Natural killer cell (primary cell): ENCODE measurements at regions of chr17 and their contacts with region 1.

Region 1: GRCh38 chr17:5536866-5537650 is 47.3 kb downstream of the NLRP1 start:
- DNase-seq: no peak
- ATAC-seq: no peak
- H3K4me3 ChIP-seq: no peak overlapping the region
- H3K4me3 Mint-ChIP-seq: no peak overlapping the region
- H3K27ac ChIP-seq: no peak overlapping the region
- H3K27ac Mint-ChIP-seq: peak overlapping the region in 1 of 2 donors; percentile 56
- H3K4me1 ChIP-seq: no peaks in the 10 kb centered on the region
- H3K4me1 Mint-ChIP-seq: peaks cover 0 to 4% of the 10 kb centered on the region in 2 donors
- H3K27me3 ChIP-seq: no peaks in the 10 kb centered on the region
- H3K27me3 Mint-ChIP-seq: no peaks in the 10 kb centered on the region
- CTCF ChIP-seq: no peak

Region 2: DNA sequence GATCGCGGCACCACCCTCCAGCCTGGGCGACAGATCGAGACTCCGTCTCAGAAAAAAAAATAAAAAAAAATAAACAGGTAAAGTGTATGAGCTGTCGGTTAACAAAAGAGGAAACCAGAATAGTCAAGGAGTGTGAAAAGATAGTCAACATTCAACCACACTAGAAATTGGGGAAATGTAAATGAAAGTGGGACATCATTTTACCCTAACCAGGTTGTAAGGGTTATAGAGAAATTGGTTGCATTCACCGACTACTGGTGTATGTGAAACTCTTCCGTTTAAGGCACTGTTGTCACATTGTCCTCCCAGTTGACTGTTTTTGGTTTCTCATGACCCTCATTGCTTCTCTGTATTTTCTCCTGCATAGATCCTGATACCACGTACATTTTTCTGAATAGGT is 192.1 kb before region 1 on chr17:
- intact Hi-C with region 1: loop called (anchors 5 kb)
- DNase-seq: no peak
- ATAC-seq: no peak
- H3K4me3 ChIP-seq: no peak overlapping the region
- H3K4me3 Mint-ChIP-seq: no peak overlapping the region
- H3K27ac ChIP-seq: no peak overlapping the region
- H3K27ac Mint-ChIP-seq: no peak overlapping the region
- H3K4me1 ChIP-seq: no peaks in the 10 kb centered on the region
- H3K4me1 Mint-ChIP-seq: no peaks in the 10 kb centered on the region
- H3K27me3 ChIP-seq: no peaks in the 10 kb centered on the region
- H3K27me3 Mint-ChIP-seq: no peaks in the 10 kb centered on the region
- CTCF ChIP-seq: no peak

Region 3: DNA sequence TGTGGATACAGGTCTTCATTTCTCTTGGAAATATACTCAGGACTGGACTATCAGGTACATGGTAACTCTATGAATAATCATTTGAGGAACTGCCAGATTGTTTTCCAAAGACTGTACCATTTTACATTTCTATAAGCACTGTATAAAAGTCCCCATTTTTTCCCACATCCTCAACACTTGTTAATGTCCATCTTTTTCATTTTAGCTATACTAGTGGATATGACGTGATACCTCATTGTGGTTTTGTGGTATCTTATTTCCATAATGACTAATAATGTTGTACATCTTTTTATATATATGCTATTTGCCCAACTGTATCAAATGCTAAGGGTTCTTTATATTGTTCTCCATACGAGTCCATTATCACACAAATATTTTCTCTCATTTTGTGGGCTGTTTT is 140.4 kb before region 1 on chr17:
- intact Hi-C with region 1: no loop called
- DNase-seq: no peak
- ATAC-seq: no peak
- H3K4me3 ChIP-seq: no peak overlapping the region
- H3K4me3 Mint-ChIP-seq: no peak overlapping the region
- H3K27ac ChIP-seq: no peak overlapping the region
- H3K27ac Mint-ChIP-seq: no peak overlapping the region
- H3K4me1 ChIP-seq: no peaks in the 10 kb centered on the region
- H3K4me1 Mint-ChIP-seq: no peaks in the 10 kb centered on the region
- H3K27me3 ChIP-seq: no peaks in the 10 kb centered on the region
- H3K27me3 Mint-ChIP-seq: no peaks in the 10 kb centered on the region
- CTCF ChIP-seq: no peak